Activated T-helper 1 cell treated with anti-CD3 and anti-CD28 coated beads, Interleukin-12 subunit alpha, Interleukin-12 subunit beta, Interleukin-2, Interleukin-4 antibody, amounts not matched to agents 30 ng/mL and 10 ng/mL and 1 ng/mL, durations not matched to agents 14 hours and 24 hours and 36 hours (primary cell): ENCODE measurements at regions of chr2 and their contacts with region 1.

Region 1: DNA sequence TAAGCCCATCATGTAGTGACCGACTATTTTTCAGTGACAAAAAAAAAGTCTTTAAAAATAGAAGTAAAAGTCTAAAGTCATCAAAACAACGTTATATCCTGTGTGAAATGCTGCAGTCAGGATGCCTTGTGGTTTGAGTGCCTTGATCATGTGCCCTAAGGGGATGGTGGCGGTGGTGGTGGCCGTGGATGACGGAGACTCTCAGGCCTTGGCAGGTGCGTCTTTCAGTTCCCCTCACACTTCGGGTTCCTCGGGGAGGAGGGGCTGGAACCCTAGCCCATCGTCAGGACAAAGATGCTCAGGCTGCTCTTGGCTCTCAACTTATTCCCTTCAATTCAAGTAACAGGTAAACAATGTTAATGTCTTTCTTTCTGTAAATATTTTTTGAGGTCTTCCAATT is at the start of gene CD28:
- DNase-seq: peak; percentile 88
- H3K4me3 Mint-ChIP-seq: peak within 1 kb of the TSS; percentile 85
- H3K27ac Mint-ChIP-seq: peak within 1 kb of the TSS; percentile 100
- H3K4me1 Mint-ChIP-seq: peaks cover 53% of the 10 kb centered on the region
- H3K27me3 Mint-ChIP-seq: no peaks in the 10 kb centered on the region
- total RNA-seq, gene CD28: 132 and 133 TPM in 2 replicates

Region 2: GRCh38 chr2:202932425-202933138 is 773.8 kb before region 1 on chr2:
- intact Hi-C with region 1: no loop called
- DNase-seq: no peak
- H3K4me3 Mint-ChIP-seq: no peak overlapping the region
- H3K27ac Mint-ChIP-seq: no peak overlapping the region
- H3K4me1 Mint-ChIP-seq: no peaks in the 10 kb centered on the region
- H3K27me3 Mint-ChIP-seq: no peaks in the 10 kb centered on the region

Region 3: DNA sequence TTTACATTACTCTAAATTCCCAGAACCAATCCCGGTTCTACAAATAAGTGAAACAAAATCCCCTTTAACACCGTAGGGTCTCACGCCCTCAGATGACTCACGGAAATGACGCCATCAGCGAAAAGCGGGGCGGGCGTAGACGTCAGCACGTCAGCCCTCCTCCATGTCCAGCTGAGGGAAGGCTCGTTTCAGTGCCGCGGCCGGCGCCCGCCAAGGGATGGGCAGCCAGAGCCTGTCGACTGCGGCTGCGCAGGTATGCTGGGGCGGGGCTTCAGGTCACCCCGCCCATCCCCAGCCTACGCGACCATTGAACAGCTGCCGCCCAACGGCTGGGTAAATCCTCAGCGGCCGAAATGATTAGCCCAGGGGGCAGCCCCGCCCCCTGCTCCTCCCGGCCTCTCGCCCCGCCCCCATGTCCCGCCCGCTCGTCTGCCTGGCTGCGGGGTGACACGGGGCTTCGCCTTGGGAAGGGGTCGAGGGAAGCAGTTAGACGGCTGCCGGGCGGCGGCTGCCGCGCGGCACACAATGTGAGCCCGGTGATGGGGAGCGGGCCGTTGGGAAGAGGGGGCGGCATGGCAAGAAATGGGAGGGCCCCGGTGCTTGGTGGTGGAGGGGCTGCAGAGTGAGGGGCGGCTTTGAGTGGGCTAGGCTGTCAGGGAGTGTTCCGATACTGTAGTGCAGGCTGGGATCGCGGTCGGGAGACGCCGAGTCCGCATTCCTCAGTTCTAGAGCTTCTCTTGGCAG is 691.8 kb before region 1 on chr2 and contains the start of gene NBEAL1:
- intact Hi-C with region 1: loop called (anchors 1 kb)
- DNase-seq: peak; percentile 97
- H3K4me3 Mint-ChIP-seq: peak within 1 kb of the TSS; percentile 94
- H3K27ac Mint-ChIP-seq: peak within 1 kb of the TSS; percentile 87
- H3K4me1 Mint-ChIP-seq: peaks cover 31% of the 10 kb centered on the region
- H3K27me3 Mint-ChIP-seq: peaks cover 4% of the 10 kb centered on the region
- total RNA-seq, gene NBEAL1: 9.2 and 10.7 TPM in 2 replicates

Region 4: DNA sequence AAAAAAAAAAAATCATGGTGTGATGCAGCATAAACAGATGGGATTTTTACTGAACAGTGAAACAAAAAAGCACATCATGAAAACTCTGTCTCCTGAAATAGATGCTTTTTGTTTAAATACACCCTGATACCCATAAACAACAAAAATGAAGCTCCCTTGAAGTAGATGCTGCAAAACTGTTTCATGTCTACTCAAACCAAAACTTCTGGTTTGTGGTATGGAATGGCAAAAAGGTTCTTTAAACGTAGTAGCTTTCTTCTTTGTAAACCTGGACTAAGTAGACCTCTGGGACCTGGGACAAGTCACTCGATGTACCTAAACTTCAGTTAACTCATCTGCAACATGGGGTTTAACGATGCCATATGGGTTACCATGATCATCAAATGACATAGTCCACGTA is 106.9 kb before region 1 on chr2:
- intact Hi-C with region 1: loop called (anchors 1 kb)
- DNase-seq: no peak
- H3K4me3 Mint-ChIP-seq: peak overlapping the region; percentile 37
- H3K27ac Mint-ChIP-seq: no peak overlapping the region
- H3K4me1 Mint-ChIP-seq: peaks cover 39% of the 10 kb centered on the region
- H3K27me3 Mint-ChIP-seq: peaks cover 59% of the 10 kb centered on the region

Region 5: DNA sequence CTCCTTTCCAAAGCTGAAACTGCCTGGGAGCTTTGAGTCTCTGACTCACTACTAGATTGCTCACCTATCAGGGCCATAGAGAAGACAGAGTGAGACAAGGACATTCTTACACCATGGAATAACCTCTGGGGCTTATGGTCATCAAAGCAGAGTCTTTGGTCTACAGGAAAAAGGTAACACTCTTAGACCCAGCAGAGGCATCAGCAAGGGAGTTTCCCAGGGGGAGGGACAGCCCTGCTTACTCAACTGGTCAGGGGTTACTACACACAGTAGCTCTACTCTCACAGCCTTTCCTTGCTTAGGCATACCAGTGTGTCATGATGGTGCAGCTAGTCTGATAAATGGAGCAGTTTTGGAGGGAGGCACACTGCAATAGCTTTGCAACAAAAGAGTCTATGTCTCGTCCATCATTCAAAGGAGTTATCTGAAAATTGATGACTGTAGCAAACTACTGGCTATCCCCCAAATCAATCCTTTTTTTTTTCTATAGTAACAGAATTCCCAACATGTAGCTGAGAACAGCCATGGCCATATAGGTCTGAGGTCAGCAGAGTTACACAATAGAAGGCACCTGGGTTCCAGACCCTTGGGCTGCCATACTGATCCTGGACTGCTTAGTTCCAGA is 22.4 kb before region 1 on chr2:
- intact Hi-C with region 1: loop called (anchors 1 kb)
- DNase-seq: peak; percentile 19
- H3K4me3 Mint-ChIP-seq: no peak overlapping the region
- H3K27ac Mint-ChIP-seq: no peak overlapping the region
- H3K4me1 Mint-ChIP-seq: peaks cover 49% of the 10 kb centered on the region
- H3K27me3 Mint-ChIP-seq: no peaks in the 10 kb centered on the region

Region 6: GRCh38 chr2:203730076-203730729 is 23.8 kb after region 1 on chr2:
- intact Hi-C with region 1: loop called (anchors 1 kb)
- DNase-seq: no peak
- H3K4me3 Mint-ChIP-seq: peak overlapping the region; percentile 32
- H3K27ac Mint-ChIP-seq: peak overlapping the region; percentile 97
- H3K4me1 Mint-ChIP-seq: peaks cover 92% of the 10 kb centered on the region
- H3K27me3 Mint-ChIP-seq: no peaks in the 10 kb centered on the region

Region 7: DNA sequence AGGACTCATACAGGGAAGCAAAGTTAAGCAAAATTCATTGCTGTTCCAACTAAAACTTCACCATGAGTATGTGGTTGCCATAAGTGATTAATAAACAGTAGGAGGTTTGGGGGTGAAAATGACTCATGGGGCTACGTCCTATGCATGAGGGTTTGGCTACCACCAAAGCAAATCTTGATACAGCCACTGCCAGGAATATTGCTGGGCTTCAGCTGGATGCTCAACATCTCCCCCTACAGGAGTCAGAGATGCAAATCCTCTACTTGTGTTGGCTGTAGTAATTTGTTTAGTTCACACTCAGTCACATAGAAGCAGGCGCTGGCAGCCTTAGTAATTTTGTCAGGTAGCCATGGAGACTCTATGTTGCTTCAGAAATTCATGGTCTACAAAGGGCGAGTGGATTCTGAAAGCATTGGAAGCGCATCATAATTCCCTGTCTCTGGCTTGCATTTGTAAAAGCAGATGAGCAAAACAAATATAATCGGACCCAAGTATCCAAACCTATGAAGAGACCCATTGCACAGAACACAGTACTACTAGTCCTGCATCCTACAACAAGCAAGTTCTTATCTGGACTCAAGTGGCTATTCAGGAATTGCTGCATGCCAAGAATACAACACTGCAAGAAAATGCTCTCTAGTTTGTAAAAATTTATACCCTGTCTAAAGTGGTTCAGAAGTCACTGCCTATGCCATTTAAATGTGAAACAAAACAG is 76.0 kb after region 1 on chr2:
- intact Hi-C with region 1: loop called (anchors 1 kb)
- DNase-seq: peak; percentile 50
- H3K4me3 Mint-ChIP-seq: no peak overlapping the region
- H3K27ac Mint-ChIP-seq: peak overlapping the region; percentile 92
- H3K4me1 Mint-ChIP-seq: peaks cover 63% of the 10 kb centered on the region
- H3K27me3 Mint-ChIP-seq: no peaks in the 10 kb centered on the region

Region 8: GRCh38 chr2:203909261-203909967 is 203.0 kb after region 1 on chr2:
- intact Hi-C with region 1: loop called (anchors 1 kb)
- DNase-seq: no peak
- H3K4me3 Mint-ChIP-seq: peak overlapping the region; percentile 41
- H3K27ac Mint-ChIP-seq: peak overlapping the region; percentile 62
- H3K4me1 Mint-ChIP-seq: peaks cover 25% of the 10 kb centered on the region
- H3K27me3 Mint-ChIP-seq: peaks cover 2% of the 10 kb centered on the region